Esophagus muscularis mucosa (tissue), 4 donors: ENCODE measurements at regions of chr19 and their contacts with region 1.

Region 1: DNA sequence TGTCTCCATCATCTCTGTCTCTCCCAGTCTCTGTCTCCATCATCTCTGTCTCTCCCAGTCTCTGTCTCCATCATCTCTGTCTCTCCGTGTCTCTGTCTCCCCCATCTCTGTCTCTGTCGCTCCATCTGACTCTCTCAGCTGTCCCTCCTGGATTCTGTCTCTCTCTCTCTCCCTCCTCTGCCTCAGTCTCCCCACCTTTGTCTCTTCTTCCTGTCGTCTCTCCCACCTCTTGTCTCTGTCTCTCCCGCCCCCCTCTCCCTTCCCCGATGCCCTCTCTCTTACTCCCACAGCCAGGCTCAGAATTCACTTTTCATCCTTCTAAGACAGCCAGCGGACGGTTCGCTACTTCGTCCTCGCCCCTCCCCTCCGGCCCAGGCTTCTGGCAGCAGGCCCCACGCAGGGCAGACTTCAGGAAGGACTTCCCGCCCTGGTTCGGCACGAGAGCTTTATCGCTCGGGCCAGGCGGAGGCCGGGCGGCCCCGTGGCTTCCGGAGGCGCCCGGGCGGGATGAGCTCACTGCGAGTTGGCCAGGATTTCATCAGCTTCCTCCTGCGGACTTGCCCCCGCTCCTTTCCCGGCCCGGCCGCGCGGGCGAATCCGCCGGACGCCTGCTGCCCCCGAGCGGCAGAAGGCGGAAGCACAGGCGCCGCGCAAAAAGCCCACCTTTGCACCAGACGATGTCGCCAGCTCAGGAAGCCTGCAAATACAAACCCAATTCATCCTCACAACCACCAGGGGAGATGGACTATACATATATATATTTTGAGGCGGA is 12.4 kb upstream of the CCDC9 start:
- DNase-seq: peak; percentile 97
- H3K4me3 ChIP-seq: peak overlapping the region; percentile 44 to 61 (median 48)
- H3K27ac ChIP-seq: peak overlapping the region; percentile 84 to 89 (median 88)
- H3K4me1 ChIP-seq: peaks cover 36 to 60% (median 55%) of the 10 kb centered on the region in 4 donors
- H3K27me3 ChIP-seq: no peaks in the 10 kb centered on the region
- CTCF ChIP-seq: peak; percentile 100
- EP300 ChIP-seq: no peak
- POLR2A ChIP-seq: no peak

Region 2: DNA sequence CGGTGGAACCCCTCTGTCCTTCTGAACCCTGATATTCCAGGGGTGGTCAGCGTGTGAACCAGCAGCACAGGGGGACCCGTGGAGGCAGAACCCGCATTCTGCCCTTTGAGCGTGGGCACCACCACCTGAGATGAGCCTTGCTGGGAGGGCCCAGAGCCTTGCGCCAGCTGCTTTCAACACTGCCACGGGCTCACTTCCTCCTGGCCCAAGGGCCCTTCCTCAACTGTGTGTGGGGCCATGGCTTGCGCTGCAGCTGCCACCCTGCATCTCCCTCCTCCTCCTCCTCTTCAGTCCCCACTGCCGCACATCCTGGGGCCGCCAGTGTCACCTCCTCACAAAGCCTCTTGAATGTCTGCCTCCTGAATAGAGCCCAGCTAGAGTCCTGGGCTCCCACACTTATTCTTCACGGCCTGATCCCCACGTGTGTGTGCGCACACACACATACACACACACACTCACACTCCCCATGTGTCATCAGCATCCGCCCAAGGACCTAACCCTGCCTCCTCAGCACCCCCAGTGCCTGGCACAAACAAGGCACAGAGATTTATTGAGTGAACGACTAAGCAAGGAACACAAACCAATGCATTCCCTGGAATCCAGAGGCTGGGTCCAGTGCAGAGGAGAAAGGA is 168.7 kb before region 1 on chr19:
- intact Hi-C with region 1: loop called (anchors 5 kb)
- DNase-seq: no peak
- H3K4me3 ChIP-seq: no peak overlapping the region
- H3K27ac ChIP-seq: no peak overlapping the region
- H3K4me1 ChIP-seq: peaks cover 5 to 36% (median 8%) of the 10 kb centered on the region in 4 donors
- H3K27me3 ChIP-seq: no peaks in the 10 kb centered on the region
- CTCF ChIP-seq: no peak
- EP300 ChIP-seq: no peak
- POLR2A ChIP-seq: no peak

Region 3: DNA sequence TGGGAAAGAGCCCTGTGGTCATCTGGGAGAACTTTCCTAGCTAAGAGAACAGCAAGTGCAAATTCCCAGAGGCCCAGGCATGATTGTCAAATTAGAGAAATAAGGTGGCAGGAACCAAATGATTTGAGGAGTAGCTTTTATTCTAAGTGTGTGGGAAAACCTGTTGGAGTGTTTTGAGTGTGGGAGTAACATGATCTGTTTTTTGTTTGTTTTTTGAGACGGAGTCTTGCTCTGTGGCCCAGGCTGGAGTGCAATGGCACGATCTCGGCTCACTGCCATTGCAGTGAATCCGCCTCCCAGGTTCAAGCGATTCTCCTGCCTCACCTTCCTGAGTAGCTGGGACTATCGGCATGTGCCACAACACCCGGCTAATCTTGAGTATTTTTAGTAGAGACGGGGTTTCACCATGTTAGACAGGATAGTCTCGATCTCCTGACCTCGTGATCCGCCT is 110.9 kb before region 1 on chr19:
- intact Hi-C with region 1: no loop called
- DNase-seq: no peak
- H3K4me3 ChIP-seq: no peak overlapping the region
- H3K27ac ChIP-seq: no peak overlapping the region
- H3K4me1 ChIP-seq: peaks cover 13 to 58% (median 47%) of the 10 kb centered on the region in 4 donors
- H3K27me3 ChIP-seq: no peaks in the 10 kb centered on the region
- CTCF ChIP-seq: no peak
- EP300 ChIP-seq: no peak
- POLR2A ChIP-seq: no peak

Region 4: GRCh38 chr19:47145639-47146486 is 98.1 kb before region 1 on chr19:
- intact Hi-C with region 1: loop called (anchors 1 kb)
- DNase-seq: no peak
- H3K4me3 ChIP-seq: no peak overlapping the region
- H3K27ac ChIP-seq: peak overlapping the region in 3 of 4 donors; percentile 20 to 79 (median 31)
- H3K4me1 ChIP-seq: peaks cover 6 to 53% (median 53%) of the 10 kb centered on the region in 4 donors
- H3K27me3 ChIP-seq: no peaks in the 10 kb centered on the region
- CTCF ChIP-seq: no peak
- EP300 ChIP-seq: no peak
- POLR2A ChIP-seq: no peak

Region 5: DNA sequence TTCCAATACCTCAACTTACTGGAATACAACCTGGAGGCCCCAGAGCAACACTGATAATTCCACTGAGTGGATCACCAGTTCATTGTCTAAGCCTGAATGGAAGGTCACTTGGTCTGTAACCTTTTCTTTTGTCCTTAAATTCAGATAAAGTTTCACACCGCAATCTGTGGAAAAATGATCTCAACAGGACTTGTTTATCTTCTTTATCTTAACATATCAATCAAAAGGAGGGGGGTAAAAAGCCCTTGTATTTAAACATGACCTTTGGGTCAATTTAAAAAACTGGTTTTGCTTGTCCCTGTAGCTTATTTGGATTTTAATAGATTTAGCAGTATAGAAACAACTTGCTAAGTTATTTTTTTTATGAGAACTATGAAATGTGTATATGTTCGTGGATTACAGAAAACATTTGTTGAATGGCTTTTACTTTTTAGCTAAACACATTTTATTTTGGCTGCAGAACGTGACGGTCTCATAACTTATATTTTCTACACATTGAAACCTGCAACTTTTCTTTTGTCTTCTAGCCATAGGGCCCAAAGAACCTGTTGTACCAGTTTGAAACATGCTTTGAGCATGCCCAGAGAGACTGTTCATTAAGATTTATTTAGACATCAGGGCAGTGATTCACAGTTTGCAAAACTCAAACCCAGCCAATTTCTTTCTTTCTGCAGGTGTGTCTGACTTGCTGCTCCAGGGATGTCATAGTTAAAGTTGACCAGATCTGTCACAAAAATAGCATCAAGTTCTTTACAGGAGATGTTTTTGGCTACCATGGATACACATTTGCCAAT is 91.5 kb before region 1 on chr19:
- intact Hi-C with region 1: loop called (anchors 1 kb)
- DNase-seq: no peak
- H3K4me3 ChIP-seq: no peak overlapping the region
- H3K27ac ChIP-seq: peak overlapping the region; percentile 81 to 90 (median 85)
- H3K4me1 ChIP-seq: peaks cover 32 to 83% (median 82%) of the 10 kb centered on the region in 4 donors
- H3K27me3 ChIP-seq: no peaks in the 10 kb centered on the region
- CTCF ChIP-seq: no peak
- EP300 ChIP-seq: no peak
- POLR2A ChIP-seq: no peak

Region 6: DNA sequence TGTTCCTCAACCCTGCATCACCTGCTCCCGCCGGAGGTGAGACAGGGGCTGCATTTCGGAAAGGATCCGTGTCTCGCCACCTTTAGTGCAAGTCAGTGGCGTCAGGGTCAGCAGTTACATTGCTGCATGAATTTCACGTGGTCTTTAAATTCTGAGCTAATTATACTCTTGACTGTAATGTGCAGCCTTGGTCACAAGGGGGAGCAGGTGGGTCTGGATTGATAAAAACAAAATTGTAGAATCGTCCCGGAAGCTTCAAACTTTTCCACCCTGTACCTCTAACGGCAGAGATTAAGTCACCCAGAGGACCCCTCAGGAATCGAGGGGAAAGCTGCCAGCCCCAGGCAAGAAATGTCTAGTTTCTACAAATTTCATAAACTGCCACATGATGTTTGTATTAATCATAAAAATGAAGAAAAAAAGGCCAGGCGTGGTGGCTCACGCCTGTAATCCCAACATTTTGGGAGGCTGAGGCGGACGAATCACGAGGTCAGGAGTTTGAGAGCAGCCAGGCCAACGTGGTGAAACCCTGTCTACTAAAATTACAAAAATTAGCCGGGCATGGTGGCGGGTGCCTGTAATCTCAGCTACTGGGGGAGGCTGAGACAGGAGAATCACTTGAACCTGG is 33.2 kb before region 1 on chr19:
- intact Hi-C with region 1: loop called (anchors 2 kb)
- DNase-seq: peak; percentile 97
- H3K4me3 ChIP-seq: no peak overlapping the region
- H3K27ac ChIP-seq: peak overlapping the region; percentile 50 to 79 (median 67)
- H3K4me1 ChIP-seq: peaks cover 11 to 21% (median 15%) of the 10 kb centered on the region in 4 donors
- H3K27me3 ChIP-seq: no peaks in the 10 kb centered on the region
- CTCF ChIP-seq: peak; percentile 84 to 97 (median 85)
- EP300 ChIP-seq: no peak
- POLR2A ChIP-seq: no peak